ENCODE measurements at regions of chr1 and their contacts with region 1.

Region 1: DNA sequence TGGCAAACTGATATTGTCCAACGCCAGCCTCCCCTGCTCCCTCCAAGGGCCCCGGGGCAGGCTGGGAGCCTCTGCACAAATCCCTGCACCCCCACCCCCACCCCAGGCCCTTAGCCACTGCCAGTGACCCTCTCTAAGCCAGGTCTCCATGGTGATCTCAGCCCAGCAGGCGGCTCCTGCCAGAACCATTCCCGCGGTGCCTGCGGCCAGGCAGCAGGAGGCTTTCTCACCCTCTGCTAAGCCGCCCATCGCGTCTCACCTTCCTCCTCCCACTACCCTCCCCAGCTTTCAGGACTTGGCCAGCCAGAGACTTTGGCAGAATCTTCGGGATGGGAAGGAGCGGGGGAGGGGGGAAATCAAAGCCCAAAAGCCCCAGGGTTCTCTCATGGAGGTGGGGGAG is 46.8 kb upstream of the WASF2 start:
- DNase-seq: peak; percentile 57 to 87
- H3K4me3 ChIP-seq: peak overlapping the region in 1 of 2 donors; percentile 15
- H3K27ac ChIP-seq: peak overlapping the region; percentile 76 to 82
- H3K4me1 ChIP-seq: peaks cover 4 to 68% (median 53%) of the 10 kb centered on the region in 4 donors
- H3K27me3 ChIP-seq: no peaks in the 10 kb centered on the region
- CTCF ChIP-seq: peak in 1 of 2 experiments; percentile 8

Region 2: DNA sequence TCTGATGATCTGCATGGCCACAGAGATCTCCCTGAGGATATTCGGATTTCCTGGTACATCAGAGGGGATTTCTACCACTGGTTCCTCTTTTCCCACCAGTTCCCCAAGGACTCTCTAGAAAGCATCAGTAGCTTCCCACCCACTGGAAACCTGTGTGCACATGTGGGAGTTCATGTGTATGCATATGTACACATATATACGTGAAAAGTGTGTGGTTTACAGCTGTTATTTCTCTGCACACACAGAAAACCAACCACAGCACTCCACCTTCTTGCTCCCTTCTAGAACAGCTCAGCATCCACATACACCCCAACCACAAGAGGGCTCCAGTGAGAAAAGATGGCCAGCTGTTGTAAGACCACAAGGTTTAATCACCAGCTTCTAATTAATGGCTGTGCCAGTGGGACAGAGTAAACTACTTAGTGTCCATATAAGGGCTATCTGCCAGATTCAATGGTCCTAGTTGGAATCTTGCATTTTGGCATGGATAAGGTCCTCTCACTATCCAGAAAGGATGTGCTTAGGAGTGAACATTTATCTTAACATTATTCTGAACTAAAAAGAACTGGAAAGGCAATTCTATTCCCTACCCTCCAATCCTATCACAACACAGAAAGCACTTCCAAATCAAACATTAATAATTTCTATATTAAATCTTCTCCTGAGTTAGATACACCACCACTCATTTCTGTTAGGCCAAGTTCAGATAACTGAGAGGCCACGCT is 120.2 kb before region 1 on chr1:
- intact Hi-C with region 1: loop called (anchors 5 kb)
- DNase-seq: no peak
- H3K4me3 ChIP-seq: no peak overlapping the region
- H3K27ac ChIP-seq: peak overlapping the region; percentile 78 to 81
- H3K4me1 ChIP-seq: peaks cover 8 to 62% (median 45%) of the 10 kb centered on the region in 4 donors
- H3K27me3 ChIP-seq: no peaks in the 10 kb centered on the region
- CTCF ChIP-seq: peak; percentile 40 to 46